Sigmoid colon (tissue), 7 donors: ENCODE measurements at regions of chr2 and their contacts with region 1.

Region 1: DNA sequence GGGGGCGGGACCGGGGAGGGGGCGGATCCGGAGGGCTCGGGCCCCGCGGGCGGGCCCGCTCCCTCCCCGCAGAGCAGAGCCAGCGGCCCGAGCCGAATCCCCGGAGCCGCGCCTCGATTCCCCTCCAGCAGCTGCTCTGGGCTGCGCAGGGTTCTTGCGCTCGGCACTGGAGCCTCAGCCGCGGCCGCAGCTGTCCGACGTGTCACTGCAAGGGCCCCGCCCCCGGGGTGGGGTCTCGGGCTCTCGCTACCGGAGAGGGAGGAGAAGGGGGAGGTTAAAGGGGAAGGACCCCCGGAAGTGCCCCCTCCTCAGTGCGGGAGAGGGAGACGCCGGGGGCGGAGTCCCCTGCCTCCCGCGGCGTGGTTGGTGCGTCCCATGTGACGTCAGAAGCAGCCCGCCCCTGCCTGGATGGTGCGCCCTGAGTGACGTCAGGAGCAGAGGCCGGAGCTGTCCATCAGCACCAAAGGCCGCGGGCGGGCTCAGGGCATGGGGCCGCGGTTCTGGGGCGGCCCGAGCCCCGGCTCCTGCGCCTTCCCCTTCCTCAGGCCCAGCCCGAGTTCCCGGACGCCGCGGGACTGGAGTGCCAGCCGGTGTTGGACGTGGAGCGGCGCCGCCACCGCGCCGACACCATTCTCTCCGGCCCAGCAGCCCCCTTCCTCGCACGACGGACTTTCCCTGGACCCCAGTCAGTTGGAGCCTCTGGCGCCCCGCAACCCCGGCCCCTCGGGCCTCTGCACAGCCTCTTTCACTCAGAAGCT is at the starts of genes CHPF and TMEM198:
- DNase-seq: peak; percentile 100
- H3K4me3 ChIP-seq: peak within 1 kb of the TSS; percentile 47 to 92 (median 74)
- H3K27ac ChIP-seq: peak within 1 kb of the TSS; percentile 90 to 97 (median 92)
- H3K4me1 ChIP-seq: peaks cover 0 to 31% (median 25%) of the 10 kb centered on the region in 4 donors
- H3K27me3 ChIP-seq: no peaks in the 10 kb centered on the region
- CTCF ChIP-seq: no peak
- EP300 ChIP-seq: peak in 1 of 4 donors; percentile 7
- POLR2A ChIP-seq: peak; percentile 33 to 49
- total RNA-seq, gene CHPF: 12.5 to 39.1 (median 23.5) TPM
- total RNA-seq, gene TMEM198: 0.71 to 3.0 (median 1.6) TPM

Region 2: DNA sequence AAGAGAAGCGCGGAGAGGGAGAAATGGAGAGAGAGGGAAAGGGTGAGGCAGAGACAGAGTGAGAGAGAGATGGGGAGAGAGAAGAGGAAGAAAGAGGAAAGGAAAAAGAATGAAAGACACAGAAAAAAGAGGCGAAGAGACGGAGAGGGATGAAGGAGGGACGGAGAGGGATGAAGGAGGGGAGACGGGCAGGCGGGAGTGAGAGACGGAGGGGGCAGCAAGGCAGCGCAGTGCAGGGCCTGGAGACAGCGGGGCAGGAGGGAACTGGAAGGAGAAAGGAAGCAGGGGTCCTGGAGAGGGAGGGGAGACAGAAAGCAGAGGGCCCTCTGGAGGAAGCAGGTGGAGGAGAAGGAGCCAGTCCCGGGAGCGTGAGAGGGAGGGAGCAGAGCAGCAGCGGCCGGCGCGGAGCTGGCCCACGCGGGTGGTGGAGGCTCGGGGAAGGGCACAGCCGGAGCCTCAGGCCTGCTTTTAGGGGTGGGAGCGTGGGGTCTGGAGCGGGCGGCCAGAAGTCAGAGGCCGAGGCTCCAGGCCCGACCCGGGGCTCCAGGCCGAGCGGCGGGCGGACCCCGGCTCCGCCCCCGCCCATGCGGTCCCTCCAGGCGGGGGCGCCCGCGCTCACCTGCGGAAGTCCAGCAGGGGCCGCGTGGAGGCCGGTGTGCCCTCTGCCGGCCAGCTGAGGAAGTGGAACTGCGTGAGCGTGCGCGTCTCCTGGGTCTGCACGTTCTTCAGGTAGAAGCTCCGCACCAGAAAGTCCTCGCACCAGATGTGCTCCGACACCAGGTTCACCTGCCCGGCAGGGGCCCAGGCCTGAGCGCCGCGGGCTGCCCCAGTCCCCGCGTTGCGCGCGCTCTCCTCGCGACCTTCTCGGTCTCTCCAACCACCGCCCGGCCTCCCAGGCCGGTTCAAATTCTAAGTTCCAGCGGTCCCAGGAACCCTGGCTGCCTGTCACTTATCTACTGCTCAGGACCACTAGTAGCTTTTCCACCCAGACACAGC is 249.1 kb before region 1 on chr2:
- intact Hi-C with region 1: loop called (anchors 10 kb)
- DNase-seq: peak; percentile 91
- H3K4me3 ChIP-seq: peak overlapping the region; percentile 43 to 65 (median 54)
- H3K27ac ChIP-seq: peak overlapping the region; percentile 84 to 91 (median 90)
- H3K4me1 ChIP-seq: peaks cover 0 to 19% (median 18%) of the 10 kb centered on the region in 4 donors
- H3K27me3 ChIP-seq: peaks cover 0 to 2% (median 2%) of the 10 kb centered on the region in 3 donors
- CTCF ChIP-seq: peak; percentile 85 to 99 (median 91)
- EP300 ChIP-seq: no peak
- POLR2A ChIP-seq: no peak

Region 3: DNA sequence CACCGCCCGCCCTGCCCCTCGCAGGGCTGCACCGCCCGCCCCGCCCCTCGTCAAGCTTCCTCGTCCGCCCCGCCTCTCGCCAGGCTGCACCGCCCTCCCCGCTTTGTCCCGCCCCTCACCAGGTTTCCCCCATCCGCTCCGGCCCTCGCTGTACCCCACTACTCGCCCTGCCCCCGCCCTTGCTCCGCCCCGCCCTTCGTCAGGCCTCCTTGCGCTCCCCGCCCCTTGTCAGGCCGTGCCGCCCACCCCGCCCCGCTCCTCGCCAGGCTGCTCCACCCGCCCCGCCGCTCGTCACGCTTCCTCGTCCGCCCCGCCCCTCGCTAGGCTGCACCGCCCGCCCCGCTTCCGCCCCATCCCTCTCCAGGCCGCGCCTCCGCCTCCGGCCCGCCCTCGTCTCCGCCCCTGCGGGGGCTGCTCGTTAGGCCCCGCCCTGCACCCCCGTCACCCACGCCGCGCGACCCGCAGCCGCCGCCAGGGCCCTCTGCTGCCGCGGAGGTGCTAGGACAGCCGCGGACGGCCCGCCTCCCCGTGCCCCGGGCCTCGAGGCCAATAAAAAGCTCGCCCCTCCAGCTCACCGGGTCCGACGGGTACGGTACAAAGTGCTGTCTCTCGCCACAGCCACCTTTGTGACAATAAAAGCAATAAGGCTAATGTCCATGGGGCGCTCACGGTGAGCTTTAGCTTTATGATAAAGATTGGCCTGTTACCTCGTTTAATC is 155.5 kb before region 1 on chr2:
- intact Hi-C with region 1: loop called (anchors 2 kb)
- DNase-seq: peak; percentile 100
- H3K4me3 ChIP-seq: peak overlapping the region; percentile 16 to 88 (median 84)
- H3K27ac ChIP-seq: peak overlapping the region; percentile 94 to 97 (median 96)
- H3K4me1 ChIP-seq: peaks cover 0 to 32% (median 26%) of the 10 kb centered on the region in 4 donors
- H3K27me3 ChIP-seq: no peaks in the 10 kb centered on the region
- CTCF ChIP-seq: peak; percentile 35 to 68 (median 48)
- EP300 ChIP-seq: no peak
- POLR2A ChIP-seq: no peak

Region 4: GRCh38 chr2:219642465-219643080 is 98.8 kb after region 1 on chr2:
- intact Hi-C with region 1: loop called (anchors 2 kb)
- DNase-seq: peak; percentile 99
- H3K4me3 ChIP-seq: no peak overlapping the region
- H3K27ac ChIP-seq: peak overlapping the region in 1 of 4 donors; percentile 30
- H3K4me1 ChIP-seq: peaks cover 0 to 25% (median 17%) of the 10 kb centered on the region in 4 donors
- H3K27me3 ChIP-seq: no peaks in the 10 kb centered on the region
- CTCF ChIP-seq: peak; percentile 99 to 100 (median 100)
- EP300 ChIP-seq: no peak
- POLR2A ChIP-seq: no peak

Region 5: DNA sequence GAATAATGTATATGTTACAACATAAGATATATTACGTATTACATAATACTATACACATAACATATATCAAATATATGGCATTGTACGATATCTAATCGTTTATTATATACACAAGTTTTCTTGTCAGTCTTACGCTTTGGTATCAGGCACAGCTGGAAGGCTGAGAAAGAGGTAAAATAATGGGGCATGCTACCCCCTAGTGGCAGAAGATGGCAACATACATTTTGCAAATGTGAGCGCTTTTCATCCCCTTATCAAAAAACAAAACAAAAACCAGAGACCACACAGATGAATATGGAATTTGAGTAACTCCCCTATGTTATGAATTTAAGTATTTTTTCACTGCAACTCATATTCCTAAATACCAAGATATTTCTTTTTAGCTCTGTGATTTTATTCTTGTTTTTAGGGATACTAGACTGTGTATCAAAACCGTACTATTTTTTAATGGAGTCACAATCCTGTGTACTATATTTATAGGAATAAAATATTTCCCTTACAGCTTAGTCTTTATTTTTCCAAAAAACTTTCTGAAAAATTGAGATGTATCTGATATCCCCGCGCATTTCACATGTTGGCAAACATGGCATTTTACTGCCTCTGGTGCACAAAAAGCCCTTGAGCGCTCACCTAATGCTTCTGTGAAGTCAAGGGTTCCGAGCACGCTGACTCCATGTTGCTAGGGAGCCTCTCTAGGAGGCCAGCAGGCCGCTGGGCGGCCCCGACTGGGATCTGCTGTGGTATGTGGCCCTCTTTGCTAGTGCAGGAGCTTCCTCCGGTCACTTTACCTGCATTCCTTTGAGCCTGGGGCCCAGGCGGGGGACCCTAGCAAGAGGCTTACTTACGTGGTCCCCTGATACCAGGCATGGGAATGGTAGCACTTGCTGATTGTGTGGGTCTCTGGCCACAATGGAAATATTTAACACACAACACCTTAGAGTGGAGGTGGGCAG is 146.2 kb after region 1 on chr2:
- intact Hi-C with region 1: loop called (anchors 2 kb)
- DNase-seq: no peak
- H3K4me3 ChIP-seq: no peak overlapping the region
- H3K27ac ChIP-seq: peak overlapping the region in 2 of 4 donors; percentile 51 to 66
- H3K4me1 ChIP-seq: peaks cover 0 to 17% (median 3%) of the 10 kb centered on the region in 4 donors
- H3K27me3 ChIP-seq: no peaks in the 10 kb centered on the region
- CTCF ChIP-seq: peak; percentile 47 to 73 (median 60)
- EP300 ChIP-seq: no peak
- POLR2A ChIP-seq: no peak